CD4-positive, alpha-beta memory T cell (primary cell): ENCODE measurements at regions of chr10 and their contacts with region 1.

Region 1: GRCh38 chr10:62816331-62817120 is at the start of gene EGR2:
- DNase-seq: peak; percentile 97 to 99 (median 98)
- H3K4me3 ChIP-seq: peak within 1 kb of the TSS; percentile 62 to 66
- H3K4me3 Mint-ChIP-seq: peak within 1 kb of the TSS; percentile 90 to 100 (median 98)
- H3K27ac ChIP-seq: peak within 1 kb of the TSS; percentile 69
- H3K27ac Mint-ChIP-seq: peak within 1 kb of the TSS; percentile 91 to 99 (median 97)
- H3K4me1 ChIP-seq: peaks cover 40% of the 10 kb centered on the region
- H3K4me1 Mint-ChIP-seq: peaks cover 25 to 56% (median 38%) of the 10 kb centered on the region in 4 donors
- H3K27me3 ChIP-seq: peaks cover 25% of the 10 kb centered on the region
- H3K27me3 Mint-ChIP-seq: peaks cover 27 to 34% of the 10 kb centered on the region in 2 donors
- total RNA-seq, gene EGR2: 2.0 to 2.2 TPM

Region 2: GRCh38 chr10:62422068-62422590 is 394.4 kb before region 1 on chr10:
- CTCF ChIA-PET with region 1: no interaction called
- POLR2A ChIA-PET with region 1: no interaction called
- intact Hi-C with region 1: no loop called
- DNase-seq: no peak
- H3K4me3 ChIP-seq: no peak overlapping the region
- H3K4me3 Mint-ChIP-seq: no peak overlapping the region
- H3K27ac ChIP-seq: no peak overlapping the region
- H3K27ac Mint-ChIP-seq: no peak overlapping the region
- H3K4me1 ChIP-seq: no peaks in the 10 kb centered on the region
- H3K4me1 Mint-ChIP-seq: no peaks in the 10 kb centered on the region
- H3K27me3 ChIP-seq: no peaks in the 10 kb centered on the region
- H3K27me3 Mint-ChIP-seq: peaks cover 0 to 3% of the 10 kb centered on the region in 2 donors

Region 3: GRCh38 chr10:62437696-62438095 is 378.8 kb before region 1 on chr10:
- CTCF ChIA-PET with region 1: interaction called, 8 read pairs
- POLR2A ChIA-PET with region 1: no interaction called
- intact Hi-C with region 1: loop called (anchors 1 kb)
- DNase-seq: peak; percentile 40 to 66 (median 62)
- H3K4me3 ChIP-seq: no peak overlapping the region
- H3K4me3 Mint-ChIP-seq: no peak overlapping the region
- H3K27ac ChIP-seq: no peak overlapping the region
- H3K27ac Mint-ChIP-seq: no peak overlapping the region
- H3K4me1 ChIP-seq: no peaks in the 10 kb centered on the region
- H3K4me1 Mint-ChIP-seq: peaks cover 0 to 5% (median 0%) of the 10 kb centered on the region in 4 donors
- H3K27me3 ChIP-seq: no peaks in the 10 kb centered on the region
- H3K27me3 Mint-ChIP-seq: no peaks in the 10 kb centered on the region

Region 4: GRCh38 chr10:62594093-62594520 is 222.4 kb before region 1 on chr10:
- CTCF ChIA-PET with region 1: interaction called, 46 read pairs
- POLR2A ChIA-PET with region 1: interaction called, 7 read pairs
- intact Hi-C with region 1: loop called (anchors 1 kb)
- DNase-seq: peak; percentile 38 to 59 (median 44)
- H3K4me3 ChIP-seq: no peak overlapping the region
- H3K4me3 Mint-ChIP-seq: peak overlapping the region in 1 of 8 donors; percentile 10
- H3K27ac ChIP-seq: no peak overlapping the region
- H3K27ac Mint-ChIP-seq: peak overlapping the region in 1 of 7 donors; percentile 9
- H3K4me1 ChIP-seq: no peaks in the 10 kb centered on the region
- H3K4me1 Mint-ChIP-seq: peaks cover 0 to 4% (median under 1%) of the 10 kb centered on the region in 4 donors
- H3K27me3 ChIP-seq: no peaks in the 10 kb centered on the region
- H3K27me3 Mint-ChIP-seq: peaks cover 3 to 5% of the 10 kb centered on the region in 2 donors

Region 5: DNA sequence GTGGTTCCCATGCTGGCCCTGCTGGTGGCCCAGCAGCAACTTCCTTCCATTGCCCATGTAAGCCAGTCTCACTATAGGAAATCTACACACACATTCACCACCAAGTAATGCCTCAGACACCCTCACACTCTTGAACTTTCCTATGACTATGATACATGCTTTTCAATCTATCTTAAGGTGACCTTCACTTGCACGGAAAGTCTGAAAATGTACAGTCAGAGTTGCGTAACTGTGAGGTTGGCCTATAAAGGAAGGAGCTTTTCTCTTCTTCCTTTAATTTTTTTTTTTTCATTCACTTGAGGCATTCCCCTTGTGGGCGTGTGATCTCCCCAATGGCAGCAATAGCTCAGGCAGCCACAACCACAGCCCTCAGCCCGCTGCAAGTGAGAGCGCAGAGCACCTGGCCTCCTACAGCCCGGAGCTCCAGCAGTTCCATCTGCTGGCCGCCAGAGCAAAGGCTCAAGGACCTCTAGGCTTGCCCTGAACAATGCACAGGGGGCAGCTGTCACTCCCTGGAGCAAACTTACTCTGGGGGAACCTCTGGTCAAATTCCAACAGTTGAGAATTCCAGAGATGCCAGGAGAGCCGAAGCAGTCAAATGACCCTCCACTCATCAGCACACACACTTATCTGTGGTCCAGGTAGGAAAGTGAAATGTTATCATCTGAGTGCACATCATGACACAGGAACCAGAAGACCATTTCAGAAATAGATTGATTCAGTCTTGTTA is 135.2 kb before region 1 on chr10:
- CTCF ChIA-PET with region 1: interaction called, 20 read pairs
- POLR2A ChIA-PET with region 1: interaction called, 3 read pairs
- intact Hi-C with region 1: loop called (anchors 2 kb)
- DNase-seq: peak; percentile 65 to 89 (median 71)
- H3K4me3 ChIP-seq: no peak overlapping the region
- H3K4me3 Mint-ChIP-seq: peak overlapping the region in 6 of 8 donors; percentile 7 to 56 (median 40)
- H3K27ac ChIP-seq: no peak overlapping the region
- H3K27ac Mint-ChIP-seq: peak overlapping the region; percentile 20 to 93 (median 79)
- H3K4me1 ChIP-seq: peaks cover 18% of the 10 kb centered on the region
- H3K4me1 Mint-ChIP-seq: peaks cover 10 to 20% (median 19%) of the 10 kb centered on the region in 4 donors
- H3K27me3 ChIP-seq: no peaks in the 10 kb centered on the region
- H3K27me3 Mint-ChIP-seq: no peaks in the 10 kb centered on the region

Region 6: GRCh38 chr10:62779487-62780248 is 36.9 kb before region 1 on chr10:
- CTCF ChIA-PET with region 1: interaction called, 19 read pairs
- POLR2A ChIA-PET with region 1: interaction called, 25 read pairs
- intact Hi-C with region 1: loop called (anchors 1 kb)
- DNase-seq: peak; percentile 84 to 96 (median 90)
- H3K4me3 ChIP-seq: no peak overlapping the region
- H3K4me3 Mint-ChIP-seq: peak overlapping the region in 5 of 8 donors; percentile 33 to 75 (median 66)
- H3K27ac ChIP-seq: peak overlapping the region; percentile 32
- H3K27ac Mint-ChIP-seq: peak overlapping the region; percentile 57 to 94 (median 79)
- H3K4me1 ChIP-seq: peaks cover 20% of the 10 kb centered on the region
- H3K4me1 Mint-ChIP-seq: peaks cover 13 to 20% (median 16%) of the 10 kb centered on the region in 4 donors
- H3K27me3 ChIP-seq: no peaks in the 10 kb centered on the region
- H3K27me3 Mint-ChIP-seq: no peaks in the 10 kb centered on the region

Region 7: DNA sequence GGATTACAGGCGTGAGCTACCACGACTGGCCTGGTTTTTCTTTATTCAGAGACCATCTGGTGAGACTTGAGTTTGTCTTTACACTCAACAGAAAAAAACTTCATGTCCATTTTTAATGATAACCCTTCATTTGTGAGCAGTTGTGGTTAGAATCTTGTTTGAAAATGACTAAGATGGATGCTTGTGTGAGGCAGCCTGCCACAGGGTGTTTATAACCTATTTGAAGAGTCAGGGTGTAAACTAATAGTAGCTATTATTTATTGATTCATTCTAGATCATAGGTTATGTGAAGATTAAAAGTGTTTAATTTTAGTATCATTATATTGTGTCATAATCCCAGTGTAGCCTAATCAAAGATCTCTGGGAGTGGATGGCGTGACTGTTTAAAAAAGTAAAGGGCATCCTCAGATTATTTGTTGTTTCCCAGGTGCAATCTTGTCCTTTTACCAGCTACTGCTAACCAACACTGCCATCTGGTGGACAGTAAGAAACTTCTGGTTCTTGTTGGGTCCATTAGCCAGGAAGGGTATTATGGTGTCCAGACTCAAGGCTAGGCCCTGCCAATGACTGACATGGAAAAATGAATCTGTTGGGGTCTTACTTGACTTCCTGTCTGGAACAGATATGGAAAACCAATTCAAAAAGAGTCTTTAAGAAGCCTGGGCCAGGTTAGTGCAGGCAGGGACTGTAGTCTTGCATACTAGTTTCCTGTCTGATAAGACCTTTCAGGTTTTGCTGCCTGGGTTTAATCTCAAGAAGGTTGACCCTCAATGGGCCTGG is 341.5 kb after region 1 on chr10:
- CTCF ChIA-PET with region 1: interaction called, 7 read pairs
- POLR2A ChIA-PET with region 1: interaction called, 4 read pairs
- intact Hi-C with region 1: loop called (anchors 1 kb)
- DNase-seq: peak; percentile 62 to 66 (median 64)
- H3K4me3 ChIP-seq: no peak overlapping the region
- H3K4me3 Mint-ChIP-seq: no peak overlapping the region
- H3K27ac ChIP-seq: no peak overlapping the region
- H3K27ac Mint-ChIP-seq: peak overlapping the region in 2 of 7 donors; percentile 47
- H3K4me1 ChIP-seq: no peaks in the 10 kb centered on the region
- H3K4me1 Mint-ChIP-seq: peaks cover 7 to 12% (median 9%) of the 10 kb centered on the region in 4 donors
- H3K27me3 ChIP-seq: no peaks in the 10 kb centered on the region
- H3K27me3 Mint-ChIP-seq: no peaks in the 10 kb centered on the region